ENCODE measurements at regions of chr16 and their contacts with region 1.

Region 1: GRCh38 chr16:2340564-2341455 is at the start of gene ABCA3:
- DNase-seq: peak; percentile 61
- H3K4me3 ChIP-seq: peak within 1 kb of the TSS; percentile 52
- H3K27ac ChIP-seq: no peak within 1 kb of the TSS
- H3K27me3 ChIP-seq: peaks cover 43% of the 10 kb centered on the region
- CTCF ChIP-seq: peak; percentile 84
- polyA plus RNA-seq, gene ABCA3: 0.06 and 0.30 TPM in 2 replicates

Region 2: GRCh38 chr16:2205104-2205966 is 135.5 kb before region 1 on chr16 and contains the start of gene MLST8:
- CTCF ChIA-PET with region 1: interaction called, 20 read pairs
- POLR2A ChIA-PET with region 1: no interaction called
- DNase-seq: peak; percentile 78
- H3K4me3 ChIP-seq: peak within 1 kb of the TSS; percentile 95
- H3K27ac ChIP-seq: peak within 1 kb of the TSS; percentile 70
- H3K27me3 ChIP-seq: peaks cover 2% of the 10 kb centered on the region
- CTCF ChIP-seq: no peak
- polyA plus RNA-seq, gene MLST8: 41.1 and 55.1 TPM in 2 replicates

Region 3: DNA sequence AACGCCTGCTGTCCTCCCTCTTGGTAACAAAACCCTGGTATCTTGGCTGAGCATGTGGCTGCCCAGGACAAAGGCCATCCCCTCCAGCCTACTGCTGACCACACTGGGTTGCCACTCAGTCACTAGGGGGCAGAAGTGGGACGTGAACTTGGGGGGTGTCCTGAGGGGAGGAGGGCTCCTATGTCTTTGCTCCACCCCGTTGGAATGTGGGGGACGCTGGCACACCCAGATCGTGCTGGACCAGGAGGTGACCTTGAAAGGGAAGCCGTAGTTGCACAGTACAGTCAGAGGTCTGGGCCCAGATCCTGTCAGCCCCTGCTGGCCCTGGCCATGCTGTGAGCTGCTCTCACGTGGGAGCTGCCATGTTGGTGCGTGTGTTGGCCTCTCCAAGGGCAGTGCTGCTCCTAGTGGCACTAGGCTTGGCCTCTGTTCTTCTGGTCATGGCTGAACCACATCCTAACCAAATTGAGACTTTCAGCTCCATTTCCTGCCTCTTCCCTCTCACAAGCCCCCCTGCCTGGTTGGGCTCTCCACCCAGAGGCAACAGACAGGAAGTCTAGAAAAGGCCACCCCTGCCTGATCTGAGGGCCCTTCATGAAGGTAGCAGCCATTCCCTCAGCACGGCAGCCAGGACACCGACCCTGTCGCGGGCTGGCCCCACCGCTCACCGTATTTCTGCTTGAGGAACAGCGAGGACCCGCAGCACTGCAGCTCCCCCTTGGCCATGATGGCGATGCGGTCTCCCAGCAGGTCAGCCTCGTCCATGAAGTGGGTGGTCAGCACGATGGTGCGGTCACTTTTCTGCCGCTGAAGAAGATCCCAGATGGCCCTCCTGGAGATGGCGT is 43.9 kb before region 1 on chr16:
- CTCF ChIA-PET with region 1: no interaction called
- POLR2A ChIA-PET with region 1: no interaction called
- DNase-seq: no peak
- H3K4me3 ChIP-seq: no peak overlapping the region
- H3K27ac ChIP-seq: no peak overlapping the region
- H3K27me3 ChIP-seq: peaks cover 12% of the 10 kb centered on the region
- CTCF ChIP-seq: peak; percentile 30; the same call in 1 of the 2 replicates

Region 4: DNA sequence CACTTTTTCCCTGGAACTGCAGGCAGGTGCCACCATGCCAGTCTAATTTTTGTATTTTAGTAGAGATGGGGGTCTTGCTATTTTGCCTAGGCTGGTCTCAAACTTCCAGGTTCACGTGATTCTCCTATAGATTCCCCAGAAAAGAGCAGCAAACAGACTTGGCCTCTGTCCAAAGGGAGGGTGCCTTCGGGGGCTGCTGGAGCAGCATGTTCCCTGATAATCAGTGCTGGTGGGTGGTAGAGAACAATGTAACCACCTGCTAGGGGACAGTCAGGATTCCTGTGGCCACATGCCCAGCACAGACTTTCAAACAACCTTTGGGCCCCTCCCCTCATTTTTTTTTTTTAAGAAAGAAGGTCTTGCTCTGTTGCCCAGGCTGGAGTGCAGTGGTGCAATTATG is 74.3 kb after region 1 on chr16:
- CTCF ChIA-PET with region 1: interaction called, 10 read pairs
- POLR2A ChIA-PET with region 1: no interaction called
- DNase-seq: no peak
- H3K4me3 ChIP-seq: no peak overlapping the region
- H3K27ac ChIP-seq: no peak overlapping the region
- H3K27me3 ChIP-seq: peaks cover 9% of the 10 kb centered on the region
- CTCF ChIP-seq: no peak

Region 5: GRCh38 chr16:3364774-3365427 is 1024.1 kb after region 1 on chr16:
- CTCF ChIA-PET with region 1: no interaction called
- POLR2A ChIA-PET with region 1: no interaction called
- DNase-seq: peak; percentile 83
- H3K4me3 ChIP-seq: peak overlapping the region; percentile 76
- H3K27ac ChIP-seq: peak overlapping the region; percentile 98
- H3K27me3 ChIP-seq: no peaks in the 10 kb centered on the region
- CTCF ChIP-seq: no peak

Measured in AG04450 (cell line).